ENCODE measurements at regions of chr17 and their contacts with region 1.

Region 1: GRCh38 chr17:29709861-29710519 is 87.3 kb upstream of the CORO6 start:
- DNase-seq: no peak
- H3K4me3 Mint-ChIP-seq: no peak overlapping the region
- H3K27ac Mint-ChIP-seq: no peak overlapping the region
- H3K4me1 Mint-ChIP-seq: peaks cover 48% of the 10 kb centered on the region
- H3K27me3 Mint-ChIP-seq: no peaks in the 10 kb centered on the region

Region 2: DNA sequence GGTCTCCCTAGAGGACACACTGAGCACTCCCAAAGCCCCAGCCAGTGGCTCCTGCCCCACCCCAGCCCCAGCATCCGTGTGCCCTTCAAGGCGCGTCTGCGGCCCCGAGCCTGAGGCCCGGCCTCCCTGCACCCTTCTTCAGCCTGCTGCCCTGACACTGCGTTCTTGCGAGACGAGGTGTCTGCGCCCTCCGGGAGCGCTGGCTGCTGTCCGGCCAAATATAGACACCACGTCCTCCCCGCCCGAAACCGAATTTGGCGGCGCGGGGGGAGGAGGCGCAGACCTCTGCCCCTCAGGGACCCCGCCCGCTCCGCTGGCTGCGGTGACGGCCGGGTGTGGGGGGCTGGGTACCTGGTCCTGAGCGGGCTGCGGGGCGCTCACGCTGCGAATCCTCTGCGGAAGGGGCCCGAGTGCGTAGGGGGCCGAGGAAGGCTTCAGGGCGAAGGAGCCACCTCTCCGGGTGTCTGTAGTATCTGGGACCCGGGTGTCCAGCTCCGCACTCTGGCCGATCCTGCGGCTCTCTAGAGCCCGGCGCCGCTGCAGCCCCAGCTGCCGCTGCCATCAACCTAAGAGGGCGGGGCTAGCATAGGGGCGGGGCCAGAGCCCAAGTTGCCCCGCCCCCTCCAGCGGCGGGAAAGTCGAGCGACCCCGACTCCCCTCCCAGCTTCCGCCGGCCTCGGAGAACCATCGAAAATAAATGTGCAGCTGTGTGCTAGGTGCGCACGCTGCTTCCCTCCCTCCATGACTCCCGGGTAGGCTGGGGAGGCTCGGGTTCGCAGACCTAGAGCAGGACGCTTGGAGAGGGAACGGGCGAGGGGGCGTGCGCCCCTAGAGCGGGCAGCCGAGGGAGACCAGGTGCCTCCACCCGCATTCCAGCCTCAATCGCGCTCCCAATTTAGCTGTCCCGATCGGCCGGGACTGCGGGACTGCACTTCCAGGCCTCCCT is 87.4 kb before region 1 on chr17 and contains the start of gene CORO6:
- intact Hi-C with region 1: loop called (anchors 1 kb)
- DNase-seq: peak; percentile 56
- H3K4me3 Mint-ChIP-seq: peak within 1 kb of the TSS; percentile 80
- H3K27ac Mint-ChIP-seq: peak within 1 kb of the TSS; percentile 81
- H3K4me1 Mint-ChIP-seq: peaks cover 41% of the 10 kb centered on the region
- H3K27me3 Mint-ChIP-seq: no peaks in the 10 kb centered on the region
- total RNA-seq, gene CORO6: 5.1 and 6.4 TPM in 2 replicates

Region 3: DNA sequence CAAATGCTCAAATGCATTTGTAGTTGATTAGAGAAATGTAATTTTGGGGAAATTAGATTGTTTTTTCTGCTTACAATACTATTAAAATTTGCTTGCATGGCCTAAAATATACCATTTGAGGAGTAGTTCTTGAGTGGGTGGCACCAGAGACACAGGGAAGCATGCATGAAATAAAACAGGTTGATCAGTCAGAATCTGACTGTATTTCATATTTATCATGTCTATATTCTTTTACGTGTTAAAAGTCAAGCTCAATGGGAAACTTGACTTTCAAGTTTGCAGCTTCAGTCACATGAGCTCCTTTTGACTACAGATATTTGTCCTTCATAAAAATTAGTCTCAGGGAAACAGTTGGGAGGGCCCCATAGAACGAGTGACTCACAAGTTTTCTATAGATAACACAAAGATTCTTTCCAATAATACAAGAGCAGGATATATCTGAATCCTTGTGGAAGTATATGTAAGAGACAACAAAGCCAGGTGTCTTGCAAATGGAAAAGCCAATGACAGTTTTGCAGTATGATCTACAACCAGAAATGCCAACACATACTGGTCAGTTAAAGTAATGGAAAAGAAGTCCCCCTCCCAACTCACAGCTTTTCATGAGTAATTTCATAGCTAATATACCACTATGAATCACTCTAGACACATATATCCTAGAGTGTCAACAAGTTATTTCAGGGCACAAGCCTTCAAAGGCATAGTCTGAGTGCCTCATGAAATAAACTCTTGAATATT is 45.1 kb before region 1 on chr17:
- intact Hi-C with region 1: loop called (anchors 1 kb)
- DNase-seq: no peak
- H3K4me3 Mint-ChIP-seq: no peak overlapping the region
- H3K27ac Mint-ChIP-seq: peak overlapping the region; percentile 46
- H3K4me1 Mint-ChIP-seq: peaks cover 31% of the 10 kb centered on the region
- H3K27me3 Mint-ChIP-seq: no peaks in the 10 kb centered on the region

Region 4: DNA sequence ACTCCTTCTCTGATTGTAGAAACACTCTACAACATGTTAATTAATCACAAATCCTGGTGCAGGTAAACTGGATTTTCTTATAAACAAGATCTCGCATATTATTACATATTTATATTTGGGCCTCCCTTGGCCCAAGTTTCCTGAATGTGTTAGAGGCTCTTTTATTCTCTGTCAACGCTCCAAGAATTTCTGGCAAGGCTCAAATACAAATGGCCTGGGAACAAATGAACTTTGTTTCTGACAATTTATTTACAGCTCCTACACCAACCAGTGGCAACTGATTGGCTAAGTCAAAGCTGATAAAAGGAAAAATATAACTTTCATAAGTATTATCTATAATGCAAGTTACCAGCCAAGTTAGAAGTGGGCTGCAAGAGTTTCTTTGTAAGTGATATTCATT is 22.4 kb before region 1 on chr17:
- intact Hi-C with region 1: loop called (anchors 1 kb)
- DNase-seq: no peak
- H3K4me3 Mint-ChIP-seq: no peak overlapping the region
- H3K27ac Mint-ChIP-seq: no peak overlapping the region
- H3K4me1 Mint-ChIP-seq: peaks cover 25% of the 10 kb centered on the region
- H3K27me3 Mint-ChIP-seq: no peaks in the 10 kb centered on the region

Region 5: DNA sequence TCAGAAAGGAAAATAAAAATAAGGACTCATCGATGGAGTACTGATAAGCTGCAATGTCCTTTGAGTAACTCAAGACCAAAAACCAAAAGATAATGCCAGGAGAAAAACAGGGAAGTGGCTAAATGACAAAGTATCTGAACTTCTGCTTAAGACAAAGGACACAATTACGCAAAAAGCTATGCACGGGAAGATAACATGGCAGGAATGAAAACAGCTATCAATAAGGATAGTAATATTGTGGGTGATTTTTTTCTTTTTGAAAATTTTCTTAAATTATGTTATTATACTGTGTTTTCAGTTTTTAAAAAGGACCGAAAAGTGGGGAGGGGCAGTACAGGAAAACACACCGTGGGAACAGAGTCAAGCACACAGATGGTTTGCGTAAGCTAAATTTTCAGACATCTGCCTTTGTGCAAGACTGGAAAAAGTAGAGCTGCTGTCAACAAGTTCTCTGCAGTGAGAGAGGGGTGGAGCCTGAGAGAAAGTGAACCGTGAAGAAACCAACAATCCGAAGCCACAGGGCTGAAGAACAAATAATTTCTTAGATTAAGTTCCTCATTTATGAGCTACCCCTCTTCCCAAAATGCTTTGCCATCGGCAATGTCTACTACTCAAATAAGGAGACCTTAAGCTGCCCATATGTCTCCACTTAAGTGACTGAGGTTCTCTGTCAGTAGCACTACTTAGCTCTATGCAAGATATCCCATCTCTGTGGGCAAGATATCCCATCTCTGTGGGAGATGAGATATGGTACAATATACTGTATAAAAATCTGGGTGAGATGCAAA is 12.6 kb after region 1 on chr17:
- intact Hi-C with region 1: loop called (anchors 1 kb)
- DNase-seq: no peak
- H3K4me3 Mint-ChIP-seq: peak overlapping the region; percentile 50
- H3K27ac Mint-ChIP-seq: peak overlapping the region; percentile 71
- H3K4me1 Mint-ChIP-seq: peaks cover 60% of the 10 kb centered on the region
- H3K27me3 Mint-ChIP-seq: no peaks in the 10 kb centered on the region

Region 6: DNA sequence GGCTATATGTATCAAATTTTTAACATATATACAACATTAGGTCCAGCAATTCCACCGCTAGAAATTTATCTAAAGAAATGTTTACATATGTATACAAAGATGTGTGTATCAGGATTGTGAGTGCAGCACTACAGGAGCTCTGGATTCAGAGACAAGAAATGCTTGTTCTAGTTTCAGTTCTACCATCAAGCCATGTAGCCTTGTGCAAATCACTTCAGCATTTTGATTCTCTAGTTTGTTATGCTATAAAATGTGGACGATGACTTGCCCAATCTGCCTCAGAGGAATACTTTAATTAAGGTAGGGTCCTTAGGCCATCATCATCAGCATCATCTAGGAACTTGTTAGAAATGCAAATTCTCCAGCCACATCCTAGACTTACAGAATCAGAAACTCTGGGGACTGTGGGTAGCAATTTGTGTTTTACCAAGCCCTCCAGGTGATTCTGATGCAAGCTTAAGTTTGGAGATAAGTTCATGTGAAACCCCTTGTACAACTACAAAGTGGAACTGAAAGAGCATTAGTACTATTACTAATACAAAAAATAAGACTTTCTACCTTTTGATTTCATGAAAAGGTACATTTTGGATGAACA is 44.0 kb after region 1 on chr17:
- intact Hi-C with region 1: no loop called
- DNase-seq: no peak
- H3K4me3 Mint-ChIP-seq: no peak overlapping the region
- H3K27ac Mint-ChIP-seq: no peak overlapping the region
- H3K4me1 Mint-ChIP-seq: peaks cover 28% of the 10 kb centered on the region
- H3K27me3 Mint-ChIP-seq: no peaks in the 10 kb centered on the region